Activated CD8-positive, alpha-beta T cell treated with anti-CD3 and anti-CD28 coated beads for 36 hours (primary cell): ENCODE measurements at regions of chr16 and their contacts with region 1.

Region 1: DNA sequence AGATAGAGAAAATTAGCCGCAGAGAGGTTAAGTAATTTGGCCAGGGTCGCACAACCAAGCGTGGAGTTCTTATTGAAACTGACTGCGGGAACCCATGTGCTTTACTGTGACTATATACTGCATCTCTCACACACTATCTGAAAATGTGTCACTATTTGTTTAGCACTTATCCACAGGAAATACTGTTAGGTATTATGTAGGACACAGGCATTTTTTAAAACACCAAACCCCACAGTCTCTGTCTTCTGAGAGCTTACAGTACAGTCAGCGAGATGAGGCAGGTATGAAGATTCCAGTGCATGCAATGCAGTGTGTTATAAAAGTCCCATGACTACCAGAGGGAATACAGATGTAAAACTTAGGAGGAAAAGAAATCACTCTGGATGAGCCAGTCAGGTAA is 11.3 kb downstream of the RBL2 start:
- DNase-seq: no peak
- ATAC-seq: peak; percentile 56
- H3K4me3 Mint-ChIP-seq: peak overlapping the region; percentile 2
- H3K27ac Mint-ChIP-seq: peak overlapping the region; percentile 77
- H3K4me1 Mint-ChIP-seq: peaks cover 44% of the 10 kb centered on the region
- H3K27me3 Mint-ChIP-seq: no peaks in the 10 kb centered on the region
- CTCF ChIP-seq: no peak

Region 2: DNA sequence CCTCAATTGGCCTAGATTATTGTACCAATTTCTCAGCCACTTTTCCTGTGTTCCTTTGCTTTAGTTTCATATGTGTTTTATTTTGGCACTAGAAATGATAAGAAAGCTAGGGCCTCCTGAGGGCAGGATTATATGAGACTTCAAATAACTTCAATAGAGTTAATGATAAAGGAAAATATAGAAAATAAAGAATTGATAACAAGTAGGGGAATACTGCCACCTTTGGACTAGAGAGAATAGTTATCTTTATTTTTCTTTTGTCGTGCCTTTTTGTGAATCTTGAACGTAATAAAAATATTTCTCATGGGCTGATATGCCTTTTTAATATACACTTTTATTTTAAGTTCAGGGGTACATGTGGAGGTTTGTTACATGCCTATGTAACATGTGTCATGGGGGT is 40.6 kb before region 1 on chr16:
- CTCF ChIA-PET with region 1: no interaction called
- POLR2A ChIA-PET with region 1: no interaction called
- intact Hi-C with region 1: no loop called
- DNase-seq: no peak
- ATAC-seq: no peak
- H3K4me3 Mint-ChIP-seq: no peak overlapping the region
- H3K27ac Mint-ChIP-seq: no peak overlapping the region
- H3K4me1 Mint-ChIP-seq: no peaks in the 10 kb centered on the region
- H3K27me3 Mint-ChIP-seq: no peaks in the 10 kb centered on the region
- CTCF ChIP-seq: no peak

Region 3: GRCh38 chr16:53457670-53458069 is 12.1 kb after region 1 on chr16:
- CTCF ChIA-PET with region 1: interaction called, 6 read pairs
- POLR2A ChIA-PET with region 1: interaction called, 23 read pairs
- intact Hi-C with region 1: loop called (anchors 1 kb)
- DNase-seq: peak; percentile 84
- ATAC-seq: peak; percentile 85
- H3K4me3 Mint-ChIP-seq: peak overlapping the region; percentile 68
- H3K27ac Mint-ChIP-seq: peak overlapping the region; percentile 93
- H3K4me1 Mint-ChIP-seq: peaks cover 87% of the 10 kb centered on the region
- H3K27me3 Mint-ChIP-seq: no peaks in the 10 kb centered on the region
- CTCF ChIP-seq: no peak